CD4-positive, alpha-beta T cell (primary cell): ENCODE measurements at regions of chr20 and their contacts with region 1.

Region 1: GRCh38 chr20:47356526-47357295 is at the start of gene ZMYND8:
- DNase-seq: peak; percentile 87 to 100 (median 95)
- ATAC-seq: peak; percentile 88
- H3K4me3 ChIP-seq: peak within 1 kb of the TSS; percentile 61
- H3K4me3 Mint-ChIP-seq: peak within 1 kb of the TSS; percentile 93
- H3K27ac ChIP-seq: peak within 1 kb of the TSS; percentile 83 to 85
- H3K27ac Mint-ChIP-seq: no peak within 1 kb of the TSS
- H3K4me1 ChIP-seq: peaks cover 74% of the 10 kb centered on the region
- H3K4me1 Mint-ChIP-seq: peaks cover 55% of the 10 kb centered on the region
- H3K27me3 ChIP-seq: no peaks in the 10 kb centered on the region
- H3K27me3 Mint-ChIP-seq: no peaks in the 10 kb centered on the region
- CTCF ChIP-seq: no peak
- total RNA-seq, gene ZMYND8: 33.0 to 34.3 TPM

Region 2: DNA sequence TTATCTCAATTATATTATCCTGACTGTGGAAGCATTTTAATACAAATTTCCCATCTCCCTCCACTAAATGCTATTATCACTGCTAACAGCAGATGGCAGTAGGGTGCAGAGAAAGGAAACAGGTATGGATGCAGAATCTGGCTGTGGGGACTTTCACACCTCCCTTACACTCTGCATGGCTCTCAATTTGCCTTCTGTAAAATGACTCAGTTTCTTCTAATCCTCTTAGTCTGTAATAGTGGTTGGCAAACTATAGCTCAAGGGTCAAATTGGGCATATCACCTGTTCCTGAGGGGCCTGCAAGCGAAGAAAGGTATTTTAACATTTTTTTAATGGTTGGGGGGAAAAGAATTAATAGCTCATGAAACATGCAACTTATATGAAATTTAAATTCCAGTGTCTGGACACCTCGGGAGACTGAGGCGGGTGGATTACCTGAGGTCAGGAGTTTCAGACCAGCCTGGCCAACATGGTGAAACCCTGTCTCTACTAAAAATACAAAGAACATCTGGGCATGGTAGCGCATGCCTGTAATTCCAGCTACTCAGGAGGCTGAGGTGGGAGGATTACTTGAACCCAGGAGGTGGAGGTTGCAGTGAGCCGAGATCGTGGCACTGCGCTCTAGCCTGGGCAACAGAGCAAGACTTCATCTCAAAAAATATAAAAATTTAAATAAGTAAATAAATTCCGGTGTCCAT is 83.7 kb before region 1 on chr20:
- CTCF ChIA-PET with region 1: interaction called, 3 read pairs
- POLR2A ChIA-PET with region 1: interaction called, 12 read pairs
- intact Hi-C with region 1: no loop called
- DNase-seq: peak in 12 of 14 experiments; percentile 7 to 81 (median 31)
- ATAC-seq: peak; percentile 84
- H3K4me3 ChIP-seq: no peak overlapping the region
- H3K4me3 Mint-ChIP-seq: no peak overlapping the region
- H3K27ac ChIP-seq: no peak overlapping the region
- H3K27ac Mint-ChIP-seq: peak overlapping the region; percentile 52
- H3K4me1 ChIP-seq: no peaks in the 10 kb centered on the region
- H3K4me1 Mint-ChIP-seq: peaks cover 28% of the 10 kb centered on the region
- H3K27me3 ChIP-seq: no peaks in the 10 kb centered on the region
- H3K27me3 Mint-ChIP-seq: no peaks in the 10 kb centered on the region
- CTCF ChIP-seq: peak; percentile 98

Region 3: GRCh38 chr20:47317127-47317895 is 39.4 kb before region 1 on chr20:
- CTCF ChIA-PET with region 1: no interaction called
- POLR2A ChIA-PET with region 1: interaction called, 9 read pairs
- intact Hi-C with region 1: loop called in 1 of 2 experiments (anchors 5 kb)
- DNase-seq: peak in 13 of 14 experiments; percentile 15 to 71 (median 47)
- ATAC-seq: peak; percentile 75
- H3K4me3 ChIP-seq: no peak overlapping the region
- H3K4me3 Mint-ChIP-seq: peak overlapping the region; percentile 38
- H3K27ac ChIP-seq: peak overlapping the region; percentile 37 to 42
- H3K27ac Mint-ChIP-seq: peak overlapping the region; percentile 81
- H3K4me1 ChIP-seq: peaks cover 53% of the 10 kb centered on the region
- H3K4me1 Mint-ChIP-seq: peaks cover 72% of the 10 kb centered on the region
- H3K27me3 ChIP-seq: no peaks in the 10 kb centered on the region
- H3K27me3 Mint-ChIP-seq: no peaks in the 10 kb centered on the region
- CTCF ChIP-seq: no peak

Region 4: GRCh38 chr20:47346111-47346526 is 10.6 kb before region 1 on chr20:
- CTCF ChIA-PET with region 1: interaction called, 3 read pairs
- POLR2A ChIA-PET with region 1: interaction called, 15 read pairs
- intact Hi-C with region 1: no loop called
- DNase-seq: peak in 2 of 14 experiments; percentile 5 to 36
- ATAC-seq: peak; percentile 40
- H3K4me3 ChIP-seq: no peak overlapping the region
- H3K4me3 Mint-ChIP-seq: peak overlapping the region; percentile 34
- H3K27ac ChIP-seq: no peak overlapping the region
- H3K27ac Mint-ChIP-seq: no peak overlapping the region
- H3K4me1 ChIP-seq: peaks cover 37% of the 10 kb centered on the region
- H3K4me1 Mint-ChIP-seq: peaks cover 18% of the 10 kb centered on the region
- H3K27me3 ChIP-seq: no peaks in the 10 kb centered on the region
- H3K27me3 Mint-ChIP-seq: no peaks in the 10 kb centered on the region
- CTCF ChIP-seq: no peak